Activated CD4-positive, alpha-beta memory T cell treated with anti-CD3 and anti-CD28 coated beads for 36 hours (primary cell): ENCODE measurements at regions of chr15 and their contacts with region 1.

Region 1: DNA sequence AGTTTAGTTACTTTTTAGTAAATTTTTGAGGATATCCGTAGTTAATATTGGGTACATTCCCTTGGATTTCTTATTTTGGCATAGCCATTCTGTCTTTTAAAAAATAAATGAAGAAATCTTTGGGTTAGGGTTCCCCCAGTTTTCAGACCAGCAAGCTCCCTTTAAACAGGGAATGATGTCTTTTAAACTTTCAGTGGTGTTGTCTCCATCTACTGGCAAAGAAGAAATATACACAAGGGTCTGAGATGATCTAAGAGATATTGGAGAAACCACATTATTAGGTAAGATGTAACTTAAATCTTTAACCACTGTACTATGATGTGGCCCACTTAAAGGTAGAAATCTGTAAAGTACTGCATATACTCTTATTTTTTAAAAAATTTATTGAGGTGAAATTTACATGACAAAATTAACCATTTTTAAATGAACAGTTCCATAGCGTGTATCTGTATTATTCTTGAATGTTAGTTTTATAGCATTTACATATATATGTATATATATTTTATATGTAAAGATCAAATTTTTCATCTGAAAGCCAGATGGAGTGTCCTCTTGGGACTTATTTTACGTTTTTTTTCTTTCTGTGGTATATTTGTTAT is 35.1 kb upstream of the EIF3J start:
- DNase-seq: no peak
- H3K4me3 Mint-ChIP-seq: no peak overlapping the region
- H3K27ac Mint-ChIP-seq: peak overlapping the region; percentile 48
- H3K4me1 Mint-ChIP-seq: peaks cover 22% of the 10 kb centered on the region
- H3K27me3 Mint-ChIP-seq: no peaks in the 10 kb centered on the region

Region 2: GRCh38 chr15:44219073-44219472 is 282.8 kb before region 1 on chr15:
- CTCF ChIA-PET with region 1: interaction called, 15 read pairs
- POLR2A ChIA-PET with region 1: no interaction called
- intact Hi-C with region 1: loop called (anchors 1 kb)
- DNase-seq: no peak
- H3K4me3 Mint-ChIP-seq: no peak overlapping the region
- H3K27ac Mint-ChIP-seq: no peak overlapping the region
- H3K4me1 Mint-ChIP-seq: peaks cover 3% of the 10 kb centered on the region
- H3K27me3 Mint-ChIP-seq: peaks cover 23% of the 10 kb centered on the region

Region 3: GRCh38 chr15:44450172-44450571 is 51.7 kb before region 1 on chr15:
- CTCF ChIA-PET with region 1: interaction called, 3 read pairs
- POLR2A ChIA-PET with region 1: no interaction called
- intact Hi-C with region 1: loop called (anchors 2 kb)
- DNase-seq: no peak
- H3K4me3 Mint-ChIP-seq: no peak overlapping the region
- H3K27ac Mint-ChIP-seq: no peak overlapping the region
- H3K4me1 Mint-ChIP-seq: peaks cover 47% of the 10 kb centered on the region
- H3K27me3 Mint-ChIP-seq: no peaks in the 10 kb centered on the region

Region 4: GRCh38 chr15:44489464-44489863 is 12.4 kb before region 1 on chr15:
- CTCF ChIA-PET with region 1: interaction called, 14 read pairs
- POLR2A ChIA-PET with region 1: interaction called, 4 read pairs
- intact Hi-C with region 1: loop called (anchors 1 kb)
- DNase-seq: no peak
- H3K4me3 Mint-ChIP-seq: no peak overlapping the region
- H3K27ac Mint-ChIP-seq: peak overlapping the region; percentile 55
- H3K4me1 Mint-ChIP-seq: peaks cover 39% of the 10 kb centered on the region
- H3K27me3 Mint-ChIP-seq: no peaks in the 10 kb centered on the region

Region 5: GRCh38 chr15:44545913-44546802 is 44.3 kb after region 1 on chr15:
- CTCF ChIA-PET with region 1: interaction called, 9 read pairs
- POLR2A ChIA-PET with region 1: interaction called, 3 read pairs
- intact Hi-C with region 1: loop called (anchors 1 kb)
- DNase-seq: peak; percentile 76
- H3K4me3 Mint-ChIP-seq: peak overlapping the region; percentile 35
- H3K27ac Mint-ChIP-seq: peak overlapping the region; percentile 74
- H3K4me1 Mint-ChIP-seq: peaks cover 50% of the 10 kb centered on the region
- H3K27me3 Mint-ChIP-seq: no peaks in the 10 kb centered on the region